Tibial artery (tissue), 4 donors: ENCODE measurements at regions of chr5 and their contacts with region 1.

Region 1: DNA sequence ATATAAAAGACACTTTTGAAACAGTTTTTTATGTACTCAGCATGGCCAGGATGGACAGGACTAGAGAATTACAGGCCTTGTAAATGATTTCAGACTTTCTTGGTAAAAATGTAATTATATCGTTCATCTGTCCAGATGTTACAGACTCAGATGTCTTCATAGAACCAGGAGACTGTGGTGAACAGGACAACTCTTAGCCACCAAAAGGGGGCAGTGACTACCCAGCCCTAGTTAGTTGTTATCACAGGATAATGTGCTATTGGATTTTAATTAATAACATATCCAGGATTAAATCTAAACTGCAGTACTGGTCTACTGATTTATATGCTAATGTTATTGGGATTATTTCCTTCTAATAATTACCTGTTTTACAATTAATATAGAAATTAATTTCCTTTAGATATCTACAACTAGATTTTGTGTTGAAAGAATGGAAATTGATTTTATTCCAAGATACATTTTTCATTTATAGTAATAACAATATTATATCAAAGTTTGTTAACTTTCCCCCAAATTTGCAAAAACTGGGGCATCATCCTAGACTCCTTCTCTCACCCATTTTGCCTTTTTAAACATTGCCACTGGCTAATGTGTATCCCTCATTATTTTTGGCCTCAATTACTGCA is 99.4 kb downstream of the MTREX start:
- DNase-seq: no peak
- H3K4me3 ChIP-seq: no peak overlapping the region
- H3K27ac ChIP-seq: peak overlapping the region in 1 of 2 donors; percentile 25
- H3K4me1 ChIP-seq: peaks cover 0 to 14% (median 0%) of the 10 kb centered on the region in 4 donors
- H3K27me3 ChIP-seq: no peaks in the 10 kb centered on the region
- CTCF ChIP-seq: peak; percentile 67 to 73

Region 2: GRCh38 chr5:54905943-54906537 is 501.1 kb before region 1 on chr5:
- intact Hi-C with region 1: no loop called
- DNase-seq: peak; percentile 74 to 79
- H3K4me3 ChIP-seq: no peak overlapping the region
- H3K27ac ChIP-seq: peak overlapping the region in 1 of 2 donors; percentile 0
- H3K4me1 ChIP-seq: peaks cover 0 to 25% (median under 1%) of the 10 kb centered on the region in 4 donors
- H3K27me3 ChIP-seq: no peaks in the 10 kb centered on the region
- CTCF ChIP-seq: peak; percentile 63 to 68

Region 3: DNA sequence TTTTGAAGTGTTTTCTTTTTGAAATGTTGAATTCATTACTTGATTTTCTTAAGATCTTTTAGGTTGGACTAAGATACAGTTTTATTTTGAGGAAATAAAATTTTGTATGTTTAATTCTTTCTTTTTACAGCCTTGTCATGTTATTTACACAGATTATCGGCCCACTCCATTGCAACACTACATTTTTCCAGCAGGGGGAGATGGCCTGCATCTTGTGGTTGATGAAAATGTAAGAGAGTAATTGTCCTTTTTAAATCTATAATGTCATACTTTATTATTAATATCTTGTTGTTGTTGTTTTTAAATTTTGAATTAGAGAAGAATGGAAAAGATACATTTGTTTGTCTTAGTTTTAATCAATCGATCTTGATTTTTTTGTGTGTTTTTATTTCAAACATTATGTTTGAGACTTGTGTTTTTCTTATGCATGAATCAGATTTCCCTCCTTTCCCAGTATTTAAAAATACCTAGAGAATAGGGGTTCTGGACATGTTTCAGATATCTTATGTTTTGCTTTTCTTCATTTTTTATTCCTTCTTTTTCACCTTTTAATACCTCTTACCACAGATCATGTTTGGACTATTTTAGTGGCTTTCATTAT is 62.7 kb before region 1 on chr5:
- intact Hi-C with region 1: loop called (anchors 5 kb)
- DNase-seq: peak; percentile 71 to 81
- H3K4me3 ChIP-seq: no peak overlapping the region
- H3K27ac ChIP-seq: peak overlapping the region; percentile 70 to 73
- H3K4me1 ChIP-seq: peaks cover 0 to 26% (median 7%) of the 10 kb centered on the region in 4 donors
- H3K27me3 ChIP-seq: no peaks in the 10 kb centered on the region
- CTCF ChIP-seq: peak; percentile 81